Colonic mucosa (tissue), 4 donors: ENCODE measurements at regions of chr14 and their contacts with region 1.

Region 1: GRCh38 chr14:55366271-55366670 is 45.4 kb downstream of the ATG14 start:
- DNase-seq: no peak
- H3K4me3 ChIP-seq: no peak overlapping the region
- H3K27ac ChIP-seq: no peak overlapping the region
- H3K4me1 ChIP-seq: no peaks in the 10 kb centered on the region
- H3K27me3 ChIP-seq: no peaks in the 10 kb centered on the region
- CTCF ChIP-seq: no peak

Region 2: DNA sequence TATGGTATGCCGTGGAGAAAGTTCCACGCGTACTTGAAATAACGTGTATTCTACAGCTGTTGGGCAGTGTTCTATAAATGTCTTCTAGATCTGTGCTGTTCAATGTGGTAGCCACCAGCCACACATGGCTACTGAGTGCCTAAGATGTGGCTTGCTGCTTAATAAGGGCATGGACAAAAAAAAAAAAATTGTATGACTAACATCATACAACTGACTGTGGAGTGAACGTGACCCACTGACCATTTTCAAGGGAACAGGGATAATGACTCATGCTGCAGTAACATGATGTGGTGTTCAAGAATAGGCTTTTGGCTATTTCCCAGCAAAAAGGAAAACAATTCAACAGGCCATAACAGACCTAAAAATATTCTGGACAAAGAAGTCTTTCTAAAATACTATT is 32.4 kb after region 1 on chr14:
- intact Hi-C with region 1: no loop called
- DNase-seq: no peak
- H3K4me3 ChIP-seq: no peak overlapping the region
- H3K27ac ChIP-seq: no peak overlapping the region
- H3K4me1 ChIP-seq: no peaks in the 10 kb centered on the region
- H3K27me3 ChIP-seq: no peaks in the 10 kb centered on the region
- CTCF ChIP-seq: no peak

Region 3: DNA sequence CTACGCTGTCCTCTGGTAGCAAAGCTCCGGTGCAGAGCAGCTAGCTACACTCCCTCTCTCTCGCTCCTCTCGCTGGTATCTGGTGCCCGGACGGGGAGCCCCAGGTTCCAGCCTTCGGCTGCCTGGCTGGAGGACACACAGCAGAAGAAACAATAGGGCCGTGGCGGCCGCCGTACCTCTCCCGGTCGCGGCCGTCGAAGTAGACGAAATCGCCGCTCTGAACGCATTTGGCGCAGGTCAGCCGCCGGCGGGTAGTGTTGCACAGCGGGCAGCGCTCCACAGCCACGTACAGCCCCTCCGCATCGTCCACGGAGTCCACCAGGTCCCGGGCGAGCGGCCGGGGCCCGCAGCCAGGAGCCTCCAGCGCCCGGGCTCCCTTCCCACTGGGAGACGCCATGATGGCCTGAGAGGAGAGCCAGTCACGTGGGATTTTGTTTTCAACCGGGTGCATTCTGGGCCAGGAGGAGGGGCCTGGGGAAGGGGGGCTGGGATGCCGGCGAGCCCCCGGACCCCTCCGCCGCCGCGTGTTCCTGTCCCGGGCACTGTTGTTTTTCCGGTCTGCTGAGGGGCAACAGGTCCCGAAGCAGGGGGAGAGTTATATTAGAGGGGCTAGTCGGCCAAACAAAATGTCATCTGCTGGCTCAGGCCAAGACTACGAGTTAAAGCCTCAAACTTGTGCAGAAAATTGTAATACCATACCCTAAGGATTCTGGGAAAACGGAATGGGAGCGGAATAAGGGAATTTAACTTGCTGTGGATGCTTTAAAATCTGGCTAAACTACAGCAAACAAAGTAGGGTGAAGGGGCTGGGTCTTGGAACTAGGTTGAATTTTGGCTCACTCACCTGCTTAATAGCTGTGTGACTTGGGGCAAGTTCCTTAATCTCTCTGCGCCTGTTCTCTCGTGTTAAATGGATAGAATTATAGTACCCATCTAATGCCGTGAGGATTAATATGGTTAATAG is 45.4 kb after region 1 on chr14 and contains the start of gene ATG14:
- intact Hi-C with region 1: loop called (anchors 10 kb)
- DNase-seq: peak; percentile 92
- H3K4me3 ChIP-seq: peak within 1 kb of the TSS; percentile 88
- H3K27ac ChIP-seq: peak within 1 kb of the TSS; percentile 74
- H3K4me1 ChIP-seq: peaks cover 7% of the 10 kb centered on the region
- H3K27me3 ChIP-seq: no peaks in the 10 kb centered on the region
- CTCF ChIP-seq: no peak
- total RNA-seq, gene ATG14: 5.4 to 7.2 TPM